Sigmoid colon (tissue), 7 donors: ENCODE measurements at regions of chr7 and their contacts with region 1.

Region 1: GRCh38 chr7:66681491-66682349 is 53.0 kb downstream of the KCTD7 start:
- DNase-seq: peak; percentile 99
- H3K4me3 ChIP-seq: peak overlapping the region; percentile 77 to 96 (median 92)
- H3K27ac ChIP-seq: peak overlapping the region; percentile 98 to 99 (median 98)
- H3K4me1 ChIP-seq: peaks cover 0 to 25% (median 17%) of the 10 kb centered on the region in 4 donors
- H3K27me3 ChIP-seq: no peaks in the 10 kb centered on the region
- CTCF ChIP-seq: no peak
- EP300 ChIP-seq: peak in 1 of 4 donors; percentile 76
- POLR2A ChIP-seq: peak; percentile 97 to 98

Region 2: DNA sequence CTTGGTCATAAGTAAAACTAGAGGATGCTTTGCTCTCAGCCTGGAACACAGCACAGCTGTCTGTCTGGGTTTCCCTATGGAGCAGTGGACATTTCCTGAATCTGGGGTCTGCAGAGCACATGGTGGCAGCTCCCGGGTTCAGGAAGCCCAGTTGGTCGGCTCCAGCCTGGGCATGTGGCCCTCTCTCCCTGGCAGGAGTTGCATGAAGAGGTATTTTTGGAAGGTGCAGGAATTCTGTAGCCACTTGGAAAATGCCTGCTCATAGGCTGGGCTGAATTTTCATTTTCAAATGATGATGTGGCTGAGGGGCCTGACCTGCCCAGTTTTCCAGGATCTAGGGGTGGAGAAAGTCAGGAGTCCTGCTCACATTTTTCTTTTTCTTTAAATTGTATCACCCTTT is 483.3 kb before region 1 on chr7:
- intact Hi-C with region 1: no loop called
- DNase-seq: peak; percentile 21
- H3K4me3 ChIP-seq: no peak overlapping the region
- H3K27ac ChIP-seq: no peak overlapping the region
- H3K4me1 ChIP-seq: no peaks in the 10 kb centered on the region
- H3K27me3 ChIP-seq: no peaks in the 10 kb centered on the region
- CTCF ChIP-seq: no peak
- EP300 ChIP-seq: no peak
- POLR2A ChIP-seq: no peak

Region 3: GRCh38 chr7:66359656-66360211 is 322.0 kb before region 1 on chr7:
- intact Hi-C with region 1: no loop called
- DNase-seq: peak; percentile 80
- H3K4me3 ChIP-seq: no peak overlapping the region
- H3K27ac ChIP-seq: peak overlapping the region in 3 of 4 donors; percentile 20 to 39 (median 20)
- H3K4me1 ChIP-seq: no peaks in the 10 kb centered on the region
- H3K27me3 ChIP-seq: no peaks in the 10 kb centered on the region
- CTCF ChIP-seq: no peak
- EP300 ChIP-seq: no peak
- POLR2A ChIP-seq: no peak

Region 4: DNA sequence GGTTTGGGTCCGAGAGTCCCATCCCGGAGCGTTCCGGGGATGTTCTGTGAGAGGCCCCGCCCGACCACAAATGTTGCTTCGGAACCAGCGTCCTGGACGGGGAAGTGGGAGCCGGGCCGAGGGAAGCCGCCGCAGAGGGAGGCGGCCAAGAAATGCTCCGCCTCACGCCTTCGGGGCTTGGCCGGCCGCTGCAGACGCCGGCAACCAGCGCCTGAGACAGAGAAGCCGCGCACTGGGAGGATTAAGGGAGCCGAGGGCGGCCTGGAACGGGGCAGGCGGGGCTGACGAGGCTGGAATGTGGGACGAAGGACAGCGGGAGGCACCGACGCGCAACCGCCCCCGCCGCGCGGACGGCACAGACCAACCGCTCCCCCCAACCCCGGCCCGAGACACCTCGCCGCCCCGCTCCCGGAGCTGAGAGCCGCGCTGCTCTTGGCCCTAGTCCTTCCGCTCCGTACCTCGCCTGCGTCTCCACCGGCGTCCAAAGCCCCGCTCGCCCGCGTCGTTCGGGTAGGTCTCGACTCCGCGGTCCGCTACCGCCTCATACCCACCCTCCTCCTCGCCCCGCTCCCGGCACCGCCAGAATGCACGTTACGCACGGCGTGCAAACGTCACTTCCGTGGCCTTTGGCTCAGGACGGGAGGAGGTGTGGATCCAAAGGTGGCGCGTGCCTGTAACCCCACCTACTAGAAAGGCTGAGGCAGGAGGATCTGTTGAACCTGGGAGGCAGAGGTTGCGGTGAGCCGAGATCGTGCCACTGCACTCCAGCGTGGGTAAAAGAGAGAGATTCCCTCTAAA is 89.7 kb before region 1 on chr7:
- intact Hi-C with region 1: loop called (anchors 5 kb)
- DNase-seq: peak; percentile 97
- H3K4me3 ChIP-seq: peak overlapping the region; percentile 71 to 94 (median 87)
- H3K27ac ChIP-seq: peak overlapping the region; percentile 93 to 99 (median 96)
- H3K4me1 ChIP-seq: peaks cover 0 to 46% (median 42%) of the 10 kb centered on the region in 4 donors
- H3K27me3 ChIP-seq: no peaks in the 10 kb centered on the region
- CTCF ChIP-seq: no peak
- EP300 ChIP-seq: peak in 2 of 4 donors; percentile 20 to 56
- POLR2A ChIP-seq: peak; percentile 97 to 98

Region 5: DNA sequence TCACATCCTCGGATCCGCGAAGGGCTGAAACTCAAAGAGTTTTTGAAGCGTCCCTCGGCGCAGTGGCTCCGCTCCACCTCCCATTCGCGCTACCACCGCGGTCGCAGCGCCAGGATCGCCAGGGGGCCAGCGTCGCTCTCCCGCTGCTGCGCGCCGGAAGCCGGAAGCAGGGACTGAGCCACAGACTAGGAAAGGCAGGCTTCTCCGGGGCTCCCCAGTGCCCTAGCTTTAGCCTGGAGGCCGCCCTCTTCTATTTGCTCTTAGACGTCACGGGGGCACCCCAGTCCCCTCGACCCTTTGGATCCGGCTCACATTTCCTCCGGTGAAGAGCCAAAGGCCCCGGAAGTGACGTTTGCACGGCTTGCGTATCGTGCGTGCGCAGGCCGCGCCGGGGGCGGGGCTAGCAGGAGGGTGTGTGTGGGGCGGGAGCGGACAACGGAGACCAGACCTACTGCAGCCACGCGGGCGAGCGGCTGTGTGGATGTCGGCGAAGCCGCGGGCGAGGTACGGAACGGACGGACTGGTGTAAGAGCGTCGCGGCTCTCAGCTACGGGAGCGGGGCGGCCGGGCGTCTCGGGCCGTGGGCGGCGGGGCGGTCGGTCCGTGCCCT is 27.5 kb before region 1 on chr7:
- intact Hi-C with region 1: loop called (anchors 2 kb)
- DNase-seq: peak; percentile 99
- H3K4me3 ChIP-seq: peak overlapping the region; percentile 77 to 90 (median 82)
- H3K27ac ChIP-seq: peak overlapping the region; percentile 96 to 98 (median 98)
- H3K4me1 ChIP-seq: peaks cover 0 to 24% (median 23%) of the 10 kb centered on the region in 4 donors
- H3K27me3 ChIP-seq: no peaks in the 10 kb centered on the region
- CTCF ChIP-seq: peak in 1 of 4 experiments; percentile 14
- EP300 ChIP-seq: peak in 2 of 4 donors; percentile 45 to 86
- POLR2A ChIP-seq: peak; percentile 92 to 96

Region 6: DNA sequence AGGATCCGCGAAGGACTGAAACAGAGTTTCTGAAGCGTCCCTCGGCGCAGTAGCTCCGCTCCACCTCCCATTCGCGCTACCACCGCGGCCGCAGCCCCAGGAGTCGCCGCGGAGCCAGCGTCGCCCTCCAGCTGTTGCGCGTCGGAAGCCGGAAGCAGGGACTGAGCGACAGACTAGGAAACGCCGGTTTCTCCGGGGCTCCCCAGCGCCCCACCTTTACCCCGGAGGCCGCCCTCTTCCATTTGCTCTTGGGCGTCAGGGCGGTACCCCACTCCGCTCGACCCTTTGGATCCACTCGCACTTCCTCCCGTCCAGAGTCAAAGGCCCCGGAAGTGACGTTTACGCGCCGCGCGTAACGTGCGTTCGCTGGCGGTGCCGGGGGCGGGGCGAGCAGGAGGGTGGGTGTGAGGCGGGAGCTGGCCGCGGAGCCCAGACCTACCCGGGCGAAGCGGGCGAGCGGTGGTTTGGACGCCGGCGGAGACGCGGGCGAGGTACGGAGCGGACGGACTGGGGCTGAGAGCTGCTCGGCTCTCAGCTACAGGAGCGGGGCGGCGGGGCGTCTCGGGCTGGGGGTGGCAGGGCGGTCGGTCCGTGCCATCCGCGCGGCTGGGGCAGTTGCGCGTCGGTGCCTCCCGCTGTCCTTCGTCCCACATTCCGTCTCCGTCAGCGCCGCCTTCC is 58.7 kb after region 1 on chr7 and contains the start of gene RABGEF1:
- intact Hi-C with region 1: loop called (anchors 1 kb)
- DNase-seq: peak; percentile 99
- H3K4me3 ChIP-seq: peak within 1 kb of the TSS; percentile 72 to 98 (median 90)
- H3K27ac ChIP-seq: peak within 1 kb of the TSS; percentile 92 to 100 (median 97)
- H3K4me1 ChIP-seq: peaks cover 0 to 36% (median 23%) of the 10 kb centered on the region in 4 donors
- H3K27me3 ChIP-seq: no peaks in the 10 kb centered on the region
- CTCF ChIP-seq: no peak
- EP300 ChIP-seq: peak in 2 of 4 donors; percentile 14 to 58
- POLR2A ChIP-seq: peak; percentile 88 to 93
- total RNA-seq, gene RABGEF1: 36.4 to 47.2 (median 41.3) TPM

Region 7: DNA sequence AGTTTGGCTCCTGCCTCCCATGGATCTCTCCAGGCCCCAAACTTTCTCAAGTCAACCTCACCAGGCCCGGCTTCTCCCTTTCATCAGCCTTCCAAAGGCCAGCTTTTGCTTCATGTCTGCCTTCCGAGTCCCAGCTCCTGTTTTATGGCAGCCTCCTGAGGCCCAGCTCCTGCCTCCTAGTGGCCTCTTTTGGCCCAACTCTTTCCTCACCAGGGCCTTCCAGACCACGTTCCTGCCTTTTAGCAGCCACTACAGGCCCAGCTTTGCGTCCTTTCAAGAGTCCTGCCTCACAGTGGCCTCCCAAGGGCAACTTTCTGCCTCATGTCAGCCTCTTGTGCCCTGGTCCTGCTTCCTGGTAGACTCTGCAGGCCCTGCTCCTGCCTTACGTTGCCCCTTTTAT is 224.0 kb after region 1 on chr7:
- intact Hi-C with region 1: no loop called
- DNase-seq: no peak
- H3K4me3 ChIP-seq: no peak overlapping the region
- H3K27ac ChIP-seq: no peak overlapping the region
- H3K4me1 ChIP-seq: no peaks in the 10 kb centered on the region
- H3K27me3 ChIP-seq: no peaks in the 10 kb centered on the region
- CTCF ChIP-seq: no peak
- EP300 ChIP-seq: no peak
- POLR2A ChIP-seq: no peak

Region 8: DNA sequence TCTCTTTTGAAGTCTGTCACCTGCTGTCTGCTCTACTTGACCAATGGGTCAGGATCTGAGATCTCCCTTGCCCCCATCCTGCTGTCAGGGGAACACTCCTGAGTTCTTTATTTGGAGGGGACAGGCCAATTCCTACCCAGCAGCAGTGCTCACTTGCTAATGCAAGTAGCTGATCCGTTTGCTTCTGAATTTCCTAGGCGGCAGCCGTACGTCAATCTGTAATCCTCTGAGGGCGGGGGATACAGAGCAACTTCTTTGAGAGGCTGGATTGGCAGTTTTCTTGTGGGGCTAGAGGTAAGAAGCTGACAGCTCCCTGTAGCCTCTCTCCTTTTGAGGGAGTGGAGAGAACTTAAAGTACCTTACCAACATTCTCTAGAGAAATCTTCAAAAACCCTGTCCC is 351.5 kb after region 1 on chr7:
- intact Hi-C with region 1: no loop called
- DNase-seq: peak; percentile 27
- H3K4me3 ChIP-seq: no peak overlapping the region
- H3K27ac ChIP-seq: no peak overlapping the region
- H3K4me1 ChIP-seq: no peaks in the 10 kb centered on the region
- H3K27me3 ChIP-seq: no peaks in the 10 kb centered on the region
- CTCF ChIP-seq: no peak
- EP300 ChIP-seq: no peak
- POLR2A ChIP-seq: no peak